Naive thymus-derived CD4-positive, alpha-beta T cell (primary cell): ENCODE measurements at regions of chr14 and their contacts with region 1.

Region 1: GRCh38 chr14:22556990-22557623 is 31.9 kb downstream of the DAD1 start:
- DNase-seq: peak; percentile 84 to 97 (median 93)
- ATAC-seq: peak; percentile 48
- H3K4me3 ChIP-seq: peak overlapping the region; percentile 65
- H3K4me3 Mint-ChIP-seq: peak overlapping the region; percentile 67 to 95 (median 88)
- H3K27ac ChIP-seq: peak overlapping the region; percentile 96
- H3K27ac Mint-ChIP-seq: peak overlapping the region; percentile 94 to 99 (median 99)
- H3K4me1 ChIP-seq: peaks cover 87 to 90% of the 10 kb centered on the region in 2 donors
- H3K4me1 Mint-ChIP-seq: peaks cover 62 to 95% (median 92%) of the 10 kb centered on the region in 7 donors
- H3K27me3 ChIP-seq: no peaks in the 10 kb centered on the region
- H3K27me3 Mint-ChIP-seq: peaks cover 0 to 4% (median 0%) of the 10 kb centered on the region in 5 donors

Region 2: GRCh38 chr14:21768116-21768874 is 788.8 kb before region 1 on chr14:
- CTCF ChIA-PET with region 1: no interaction called
- POLR2A ChIA-PET with region 1: no interaction called
- intact Hi-C with region 1: loop called in 1 of 2 experiments (anchors 1 kb)
- DNase-seq: peak in 7 of 9 donors; percentile 21 to 56 (median 41)
- ATAC-seq: peak; percentile 85
- H3K4me3 ChIP-seq: no peak overlapping the region
- H3K4me3 Mint-ChIP-seq: peak overlapping the region; percentile 42 to 81 (median 68)
- H3K27ac ChIP-seq: peak overlapping the region; percentile 6
- H3K27ac Mint-ChIP-seq: peak overlapping the region; percentile 4 to 87 (median 76)
- H3K4me1 ChIP-seq: no peaks in the 10 kb centered on the region
- H3K4me1 Mint-ChIP-seq: peaks cover 0 to 9% (median 0%) of the 10 kb centered on the region in 7 donors
- H3K27me3 ChIP-seq: no peaks in the 10 kb centered on the region
- H3K27me3 Mint-ChIP-seq: peaks cover 0 to 30% (median 5%) of the 10 kb centered on the region in 5 donors

Region 3: GRCh38 chr14:21917699-21918436 is 639.2 kb before region 1 on chr14:
- CTCF ChIA-PET with region 1: interaction called, 4 read pairs
- POLR2A ChIA-PET with region 1: interaction called, 26 read pairs
- intact Hi-C with region 1: loop called (anchors 1 kb)
- DNase-seq: peak in 7 of 9 donors; percentile 60 to 73 (median 64)
- ATAC-seq: peak; percentile 78
- H3K4me3 ChIP-seq: peak overlapping the region; percentile 49
- H3K4me3 Mint-ChIP-seq: peak overlapping the region; percentile 64 to 93 (median 84)
- H3K27ac ChIP-seq: peak overlapping the region; percentile 44
- H3K27ac Mint-ChIP-seq: peak overlapping the region; percentile 76 to 94 (median 85)
- H3K4me1 ChIP-seq: peaks cover 10 to 49% of the 10 kb centered on the region in 2 donors
- H3K4me1 Mint-ChIP-seq: peaks cover 12 to 83% (median 68%) of the 10 kb centered on the region in 7 donors
- H3K27me3 ChIP-seq: no peaks in the 10 kb centered on the region
- H3K27me3 Mint-ChIP-seq: no peaks in the 10 kb centered on the region

Region 4: GRCh38 chr14:22122227-22122818 is 434.8 kb before region 1 on chr14:
- CTCF ChIA-PET with region 1: interaction called, 3 read pairs
- POLR2A ChIA-PET with region 1: interaction called, 20 read pairs
- intact Hi-C with region 1: loop called (anchors 1 to 5 kb)
- DNase-seq: peak in 3 of 9 donors; percentile 26 to 46 (median 37)
- ATAC-seq: no peak
- H3K4me3 ChIP-seq: peak overlapping the region; percentile 20
- H3K4me3 Mint-ChIP-seq: peak overlapping the region; percentile 72 to 95 (median 85)
- H3K27ac ChIP-seq: peak overlapping the region; percentile 71
- H3K27ac Mint-ChIP-seq: peak overlapping the region in 8 of 9 donors; percentile 84 to 95 (median 91)
- H3K4me1 ChIP-seq: no peaks in the 10 kb centered on the region
- H3K4me1 Mint-ChIP-seq: peaks cover 0 to 30% (median 18%) of the 10 kb centered on the region in 7 donors
- H3K27me3 ChIP-seq: no peaks in the 10 kb centered on the region
- H3K27me3 Mint-ChIP-seq: peaks cover 0 to 7% (median 0%) of the 10 kb centered on the region in 5 donors

Region 5: DNA sequence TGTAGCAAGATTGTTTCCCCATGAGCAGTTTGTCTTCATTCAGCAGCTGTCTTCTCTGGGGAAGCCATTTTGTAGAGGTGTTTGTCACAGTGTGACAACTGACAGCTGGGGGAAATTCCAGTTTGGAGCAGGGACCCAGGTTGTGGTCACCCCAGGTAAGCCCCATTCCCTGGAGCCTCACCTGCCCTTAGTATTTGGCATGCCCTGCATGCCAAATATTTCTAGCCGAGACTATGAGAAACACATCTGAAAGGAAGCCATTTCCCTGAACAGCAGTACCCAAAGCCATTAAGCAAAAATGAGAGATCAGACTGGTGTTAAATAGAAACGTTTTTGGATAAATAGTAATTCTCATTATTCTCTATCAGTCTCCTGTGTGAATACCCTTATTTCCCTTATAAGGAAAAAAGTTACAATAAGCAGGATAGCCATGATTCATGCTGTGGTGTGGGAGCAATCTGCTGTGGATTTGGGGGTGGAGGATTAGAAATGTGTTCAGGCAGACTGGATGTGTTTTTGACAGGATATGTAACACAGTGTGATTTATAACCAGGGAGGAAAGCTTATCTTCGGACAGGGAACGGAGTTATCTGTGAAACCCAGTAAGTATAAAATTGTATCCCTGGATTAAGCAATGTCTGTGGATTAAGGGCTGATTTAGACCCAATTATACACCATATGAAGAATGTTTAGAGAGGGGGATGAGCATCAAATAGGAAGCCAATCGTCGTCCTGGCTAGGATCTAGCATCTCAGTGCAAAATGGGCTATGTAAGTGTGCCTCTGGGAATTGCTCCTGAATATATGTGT is 37.0 kb before region 1 on chr14:
- CTCF ChIA-PET with region 1: interaction called, 17 read pairs
- POLR2A ChIA-PET with region 1: interaction called, 709 read pairs
- intact Hi-C with region 1: loop called (anchors 1 to 5 kb)
- DNase-seq: peak in 1 of 9 donors; percentile 31
- ATAC-seq: peak; percentile 33
- H3K4me3 ChIP-seq: peak overlapping the region; percentile 56
- H3K4me3 Mint-ChIP-seq: peak overlapping the region; percentile 79 to 92 (median 89)
- H3K27ac ChIP-seq: peak overlapping the region; percentile 90
- H3K27ac Mint-ChIP-seq: peak overlapping the region; percentile 93 to 99 (median 96)
- H3K4me1 ChIP-seq: peaks cover 90 to 91% of the 10 kb centered on the region in 2 donors
- H3K4me1 Mint-ChIP-seq: peaks cover 28 to 99% (median 94%) of the 10 kb centered on the region in 7 donors
- H3K27me3 ChIP-seq: no peaks in the 10 kb centered on the region
- H3K27me3 Mint-ChIP-seq: no peaks in the 10 kb centered on the region

Region 6: DNA sequence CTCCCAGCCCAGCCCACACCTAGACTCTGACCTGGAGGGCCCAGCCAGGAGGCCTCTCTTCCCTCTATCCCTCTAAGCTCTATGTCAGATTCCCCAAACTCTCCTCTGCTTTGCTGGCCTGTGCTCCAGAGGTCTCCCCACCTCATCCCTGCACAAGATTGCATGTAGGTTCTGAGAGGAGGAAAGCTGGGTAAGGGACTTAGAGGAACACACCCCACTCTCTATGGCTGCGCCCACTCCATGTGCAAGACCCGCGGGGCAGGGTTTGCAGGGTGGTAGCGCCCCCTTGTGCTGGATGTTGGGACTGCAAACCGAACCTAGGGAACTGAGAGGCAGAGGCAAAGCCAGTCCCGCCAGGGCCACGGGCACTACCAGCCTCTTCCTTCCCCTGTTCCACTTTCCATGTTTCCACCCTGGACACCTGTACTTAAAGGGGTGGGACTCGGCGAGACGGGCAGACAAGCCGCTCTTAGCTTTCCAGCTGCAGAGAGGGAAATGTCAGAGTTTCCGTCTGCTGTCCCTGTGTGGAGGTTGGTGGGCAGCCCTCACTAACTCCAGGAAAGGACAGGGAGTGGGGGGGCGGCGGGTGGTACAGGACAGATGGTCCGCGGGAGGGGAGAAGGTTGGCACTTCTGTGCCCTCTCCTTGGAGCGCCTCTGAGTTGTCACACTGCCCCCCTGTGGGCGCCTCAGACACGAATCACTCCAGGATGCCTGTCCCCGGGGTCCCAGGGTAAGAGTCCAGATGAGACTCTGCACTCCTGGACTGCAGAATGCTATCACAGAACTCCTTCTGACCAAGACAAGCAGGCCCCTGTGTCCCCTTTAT is 296.0 kb after region 1 on chr14:
- CTCF ChIA-PET with region 1: interaction called, 4 read pairs
- POLR2A ChIA-PET with region 1: interaction called, 4 read pairs
- intact Hi-C with region 1: loop called (anchors 1 kb)
- DNase-seq: peak; percentile 75 to 94 (median 87)
- ATAC-seq: peak; percentile 96
- H3K4me3 ChIP-seq: peak overlapping the region; percentile 74
- H3K4me3 Mint-ChIP-seq: peak overlapping the region; percentile 81 to 89 (median 86)
- H3K27ac ChIP-seq: peak overlapping the region; percentile 72
- H3K27ac Mint-ChIP-seq: peak overlapping the region in 7 of 9 donors; percentile 71 to 85 (median 81)
- H3K4me1 ChIP-seq: peaks cover 3% of the 10 kb centered on the region in 2 donors
- H3K4me1 Mint-ChIP-seq: peaks cover 8 to 30% (median 21%) of the 10 kb centered on the region in 7 donors
- H3K27me3 ChIP-seq: no peaks in the 10 kb centered on the region
- H3K27me3 Mint-ChIP-seq: peaks cover 0 to 19% (median 6%) of the 10 kb centered on the region in 5 donors